Activated CD4-positive, alpha-beta T cell treated with anti-CD3 and anti-CD28 coated beads for 36 hours (primary cell): ENCODE measurements at regions of chr9 and their contacts with region 1.

Region 1: GRCh38 chr9:121545875-121546423 is 46.3 kb upstream of the GGTA1 start:
- DNase-seq: peak; percentile 86
- ATAC-seq: peak; percentile 89
- H3K4me3 Mint-ChIP-seq: no peak overlapping the region
- H3K27ac Mint-ChIP-seq: no peak overlapping the region
- H3K4me1 Mint-ChIP-seq: peaks cover under 1% of the 10 kb centered on the region
- H3K27me3 Mint-ChIP-seq: peaks cover 17% of the 10 kb centered on the region

Region 2: DNA sequence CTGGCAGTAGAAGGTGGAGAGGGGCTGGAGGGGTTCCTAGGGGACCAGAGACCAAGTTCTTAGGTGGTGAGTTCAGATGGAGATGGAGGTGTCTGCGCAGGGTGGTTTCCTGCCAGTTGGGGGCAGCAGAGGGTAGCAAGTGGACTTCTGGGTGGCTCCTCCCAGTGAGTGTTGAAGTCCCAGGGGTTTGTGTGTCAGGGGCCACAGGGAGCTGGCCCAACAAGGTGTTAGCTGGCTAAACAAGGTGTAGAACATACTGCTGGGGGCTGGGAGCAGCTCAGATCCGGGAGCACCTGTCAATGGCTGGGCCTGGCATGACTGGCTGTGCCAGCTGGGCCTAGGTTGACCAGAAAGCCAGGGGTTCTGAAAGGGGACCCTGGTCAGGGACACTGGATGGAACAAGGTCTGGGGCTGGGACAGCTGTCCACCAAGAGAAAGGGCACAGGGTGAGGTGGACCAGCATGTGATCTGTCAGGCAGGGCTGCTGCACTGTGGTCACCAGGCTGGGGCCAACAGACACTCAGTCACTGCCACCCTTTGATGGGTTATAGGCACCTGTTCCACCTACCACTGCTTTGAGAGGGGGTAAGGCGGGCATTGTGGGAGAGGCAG is 141.1 kb after region 1 on chr9:
- CTCF ChIA-PET with region 1: interaction called, 3 read pairs
- POLR2A ChIA-PET with region 1: no interaction called
- intact Hi-C with region 1: loop called in 1 of 2 experiments (anchors 1 kb)
- DNase-seq: peak; percentile 84
- ATAC-seq: peak; percentile 88
- H3K4me3 Mint-ChIP-seq: no peak overlapping the region
- H3K27ac Mint-ChIP-seq: no peak overlapping the region
- H3K4me1 Mint-ChIP-seq: no peaks in the 10 kb centered on the region
- H3K27me3 Mint-ChIP-seq: peaks cover 5% of the 10 kb centered on the region

Region 3: DNA sequence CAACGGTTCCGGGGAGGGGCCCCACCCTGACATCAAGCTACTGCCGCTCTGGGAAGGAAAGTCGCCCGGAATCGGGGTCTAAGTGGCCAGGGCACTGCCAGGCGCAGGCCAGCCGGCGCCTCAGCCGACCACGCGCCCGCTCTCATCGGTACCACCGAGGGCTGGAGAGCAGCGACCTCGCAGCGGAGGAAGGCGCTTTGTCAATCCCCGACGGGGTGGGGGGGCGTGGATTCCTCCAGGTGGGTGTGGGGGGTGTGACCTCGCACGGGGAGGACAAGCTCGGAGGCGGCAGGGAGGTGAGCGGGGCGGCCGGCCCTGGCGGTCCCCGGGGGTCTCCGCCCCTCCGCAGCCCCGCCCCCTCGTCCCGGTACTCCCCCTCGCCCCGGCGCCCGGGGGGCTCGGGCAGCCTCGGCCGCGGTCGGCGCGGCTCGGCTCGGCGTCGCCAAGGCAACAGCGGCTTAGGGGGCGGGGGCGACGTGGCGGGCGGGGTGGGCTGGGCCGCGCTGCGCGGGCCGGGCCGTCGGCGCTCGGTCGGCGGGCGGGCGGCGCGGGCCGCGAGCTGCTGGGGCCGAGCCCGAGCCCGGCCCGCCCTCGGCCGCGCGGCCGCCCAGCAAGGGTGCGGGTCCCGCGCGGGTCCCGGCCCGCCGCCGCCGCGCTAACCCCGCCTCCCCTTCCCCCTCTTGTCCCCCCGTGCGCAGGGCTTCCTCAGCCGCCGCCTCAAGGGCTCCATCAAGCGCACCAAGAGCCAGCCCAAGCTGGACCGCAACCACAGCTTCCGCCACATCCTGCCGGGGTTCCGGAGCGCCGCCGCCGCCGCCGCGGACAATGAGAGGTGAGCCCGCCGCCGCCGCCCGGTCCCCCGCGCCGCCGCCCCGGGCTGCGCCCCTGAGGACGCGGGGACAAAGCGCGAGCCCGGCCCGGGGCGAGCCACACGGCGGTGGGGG is 152.9 kb after region 1 on chr9:
- CTCF ChIA-PET with region 1: interaction called, 3 read pairs
- POLR2A ChIA-PET with region 1: no interaction called
- intact Hi-C with region 1: loop called (anchors 5 kb)
- DNase-seq: peak; percentile 78
- ATAC-seq: peak; percentile 73
- H3K4me3 Mint-ChIP-seq: no peak overlapping the region
- H3K27ac Mint-ChIP-seq: no peak overlapping the region
- H3K4me1 Mint-ChIP-seq: no peaks in the 10 kb centered on the region
- H3K27me3 Mint-ChIP-seq: peaks cover 37% of the 10 kb centered on the region